Posterior vena cava (tissue), 2 donors: ENCODE measurements at regions of chr17 and their contacts with region 1.

Region 1: DNA sequence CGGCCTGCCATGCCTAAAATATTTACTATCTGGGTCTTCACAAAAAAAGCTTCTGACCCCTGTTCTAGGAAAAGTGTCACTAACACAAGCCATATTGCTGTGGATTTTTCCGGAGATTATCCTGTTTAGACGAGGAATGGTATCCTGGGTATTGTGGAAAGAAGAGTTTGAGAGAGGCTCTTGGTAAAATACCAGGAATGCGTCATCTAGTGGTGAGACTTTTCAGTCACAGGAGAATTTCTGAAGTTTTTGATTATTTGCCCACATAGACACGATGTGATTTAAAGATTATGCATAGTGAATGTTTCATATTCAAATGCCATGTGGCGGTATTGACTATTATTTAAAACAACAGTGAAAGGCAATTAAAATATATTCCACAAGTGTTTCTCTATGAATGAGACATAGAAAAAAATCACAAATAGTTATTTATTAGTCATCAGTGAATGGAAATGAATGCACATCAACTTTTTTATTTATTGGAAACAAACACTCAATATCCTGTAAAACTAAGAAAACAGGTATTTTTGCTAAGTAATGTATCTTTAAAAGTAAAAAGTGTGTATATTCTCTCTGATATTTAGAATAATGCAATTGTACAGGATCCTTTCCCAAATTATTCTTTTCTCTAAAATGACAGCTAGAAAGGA is 7.8 kb downstream of the KRT28 start:
- DNase-seq: no peak

Region 2: GRCh38 chr17:40615295-40615988 is 176.5 kb before region 1 on chr17:
- intact Hi-C with region 1: loop called in 1 of 2 experiments (anchors 10 kb)
- DNase-seq: no peak

Region 3: GRCh38 chr17:40763752-40764151 is 28.2 kb before region 1 on chr17:
- intact Hi-C with region 1: loop called in 1 of 2 experiments (anchors 1 kb)
- DNase-seq: no peak

Region 4: GRCh38 chr17:40818733-40819527 is 27.0 kb after region 1 on chr17:
- intact Hi-C with region 1: no loop called
- DNase-seq: peak; percentile 95